ENCODE measurements at regions of chr10 and their contacts with region 1.

Region 1: DNA sequence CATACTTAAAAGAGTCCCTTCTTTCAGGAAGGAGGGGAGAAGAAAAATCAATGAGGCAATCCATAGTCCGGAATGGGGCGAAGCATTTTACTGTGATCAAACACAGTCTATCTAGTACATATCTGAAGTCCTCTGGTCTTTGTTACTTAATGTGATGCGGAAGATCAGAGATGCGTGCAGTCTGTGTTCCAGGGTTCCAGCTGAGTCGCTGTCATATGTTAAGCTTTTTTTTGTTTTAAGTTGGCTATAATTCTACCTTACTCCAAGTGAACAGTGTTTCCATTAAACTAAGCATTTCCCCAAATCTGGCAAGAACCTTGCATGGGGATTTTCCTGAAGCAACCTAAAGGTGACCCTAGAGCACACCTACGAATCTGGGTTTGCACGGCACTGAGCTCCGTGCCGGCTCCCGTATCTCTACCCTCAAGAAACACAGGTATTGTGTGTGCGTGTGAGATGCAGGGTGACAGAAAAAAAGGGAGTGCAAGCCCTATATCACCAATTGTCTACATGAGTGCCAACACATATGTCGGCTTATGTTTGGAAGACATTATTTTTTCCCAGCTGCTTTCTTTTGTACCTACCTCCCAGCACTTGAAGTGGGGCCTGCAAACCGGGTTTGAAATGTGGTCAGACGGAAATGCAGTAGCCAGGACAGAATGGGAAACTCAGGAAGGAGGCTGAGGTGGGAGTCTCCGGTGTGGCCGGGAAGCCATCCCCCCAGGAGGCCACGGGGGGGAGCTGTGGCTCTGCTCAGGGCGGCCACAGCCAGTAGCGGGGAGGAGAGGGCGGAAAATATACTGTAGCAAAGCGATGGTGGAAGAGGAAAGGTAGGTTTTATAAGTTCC is 435.8 kb upstream of the MGMT start:
- DNase-seq: peak; percentile 67
- H3K4me3 Mint-ChIP-seq: no peak overlapping the region
- H3K27ac Mint-ChIP-seq: no peak overlapping the region
- H3K4me1 Mint-ChIP-seq: peaks cover 6% of the 10 kb centered on the region
- H3K27me3 Mint-ChIP-seq: peaks cover 45% of the 10 kb centered on the region
- CTCF ChIP-seq: peak; percentile 95

Region 2: GRCh38 chr10:129049501-129049900 is 18.3 kb after region 1 on chr10:
- CTCF ChIA-PET with region 1: no interaction called
- POLR2A ChIA-PET with region 1: no interaction called
- intact Hi-C with region 1: no loop called
- DNase-seq: no peak
- H3K4me3 Mint-ChIP-seq: no peak overlapping the region
- H3K27ac Mint-ChIP-seq: no peak overlapping the region
- H3K4me1 Mint-ChIP-seq: no peaks in the 10 kb centered on the region
- H3K27me3 Mint-ChIP-seq: no peaks in the 10 kb centered on the region
- CTCF ChIP-seq: no peak

Region 3: GRCh38 chr10:129332476-129332875 is 301.3 kb after region 1 on chr10:
- CTCF ChIA-PET with region 1: interaction called, 27 read pairs
- POLR2A ChIA-PET with region 1: no interaction called
- intact Hi-C with region 1: loop called (anchors 1 kb)
- DNase-seq: peak; percentile 66
- H3K4me3 Mint-ChIP-seq: no peak overlapping the region
- H3K27ac Mint-ChIP-seq: no peak overlapping the region
- H3K4me1 Mint-ChIP-seq: peaks cover 11% of the 10 kb centered on the region
- H3K27me3 Mint-ChIP-seq: no peaks in the 10 kb centered on the region
- CTCF ChIP-seq: peak; percentile 33

Region 4: DNA sequence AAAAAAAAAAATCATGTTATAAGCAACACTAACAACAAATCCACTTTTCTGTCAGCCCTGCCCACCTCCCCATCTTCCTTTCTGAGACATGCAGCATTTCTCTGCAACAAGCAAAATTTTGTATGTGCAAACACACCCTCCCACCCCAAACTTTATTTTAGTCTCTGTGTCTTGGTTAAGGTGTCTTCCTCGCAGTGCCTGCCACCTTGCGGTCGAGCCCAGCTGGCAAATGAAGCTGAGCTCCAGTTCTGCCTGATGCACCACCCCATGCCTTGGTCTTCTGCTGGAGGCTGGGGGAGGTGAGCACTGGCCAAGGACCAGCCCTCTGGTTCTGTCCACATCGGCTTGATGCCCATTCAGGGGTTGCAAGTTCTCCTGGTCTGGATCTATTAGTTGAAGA is 642.1 kb after region 1 on chr10:
- CTCF ChIA-PET with region 1: no interaction called
- POLR2A ChIA-PET with region 1: no interaction called
- intact Hi-C with region 1: loop called (anchors 1 kb)
- DNase-seq: no peak
- H3K4me3 Mint-ChIP-seq: no peak overlapping the region
- H3K27ac Mint-ChIP-seq: no peak overlapping the region
- H3K4me1 Mint-ChIP-seq: no peaks in the 10 kb centered on the region
- H3K27me3 Mint-ChIP-seq: no peaks in the 10 kb centered on the region
- CTCF ChIP-seq: peak; percentile 18

Region 5: DNA sequence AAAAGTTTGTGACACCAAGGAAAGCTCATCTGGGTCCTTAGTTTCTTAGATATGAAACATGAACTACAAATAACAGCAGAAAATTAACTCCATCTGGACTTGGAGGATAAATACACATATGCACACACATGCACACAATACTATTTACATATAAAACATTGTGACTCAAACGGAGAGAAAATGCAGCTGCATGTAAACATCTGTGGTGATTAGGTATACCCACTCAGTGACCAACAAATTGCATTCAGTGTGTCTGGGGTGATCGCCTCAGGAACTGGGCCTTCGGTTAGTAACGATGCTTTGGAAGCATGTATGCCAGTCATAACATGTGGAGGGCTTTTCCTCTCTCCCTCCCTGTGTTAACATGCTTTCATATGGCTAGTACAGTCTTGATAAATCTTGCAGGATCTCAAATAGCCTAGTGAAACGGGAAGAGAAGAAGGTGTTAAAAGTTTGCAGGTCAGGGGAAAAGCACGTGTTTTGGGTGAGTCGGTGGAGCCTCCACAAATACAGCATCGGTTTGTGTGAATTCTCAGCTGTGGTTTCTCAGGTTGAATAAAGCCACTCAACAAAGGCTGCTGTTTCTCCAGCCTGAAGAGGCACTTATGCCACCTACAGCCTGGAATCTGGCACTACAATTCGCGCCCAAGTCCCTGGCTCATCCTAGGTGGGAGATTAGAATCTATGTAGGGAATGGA is 1096.3 kb after region 1 on chr10:
- CTCF ChIA-PET with region 1: interaction called, 11 read pairs
- POLR2A ChIA-PET with region 1: interaction called, 3 read pairs
- intact Hi-C with region 1: loop called (anchors 1 kb)
- DNase-seq: peak; percentile 73
- H3K4me3 Mint-ChIP-seq: no peak overlapping the region
- H3K27ac Mint-ChIP-seq: no peak overlapping the region
- H3K4me1 Mint-ChIP-seq: peaks cover 6% of the 10 kb centered on the region
- H3K27me3 Mint-ChIP-seq: no peaks in the 10 kb centered on the region
- CTCF ChIP-seq: peak; percentile 87

Region 6: GRCh38 chr10:130179640-130180039 is 1148.4 kb after region 1 on chr10:
- CTCF ChIA-PET with region 1: no interaction called
- POLR2A ChIA-PET with region 1: no interaction called
- intact Hi-C with region 1: loop called (anchors 2 kb)
- DNase-seq: peak; percentile 51
- H3K4me3 Mint-ChIP-seq: no peak overlapping the region
- H3K27ac Mint-ChIP-seq: no peak overlapping the region
- H3K4me1 Mint-ChIP-seq: no peaks in the 10 kb centered on the region
- H3K27me3 Mint-ChIP-seq: no peaks in the 10 kb centered on the region
- CTCF ChIP-seq: peak; percentile 24